HEK293 (cell line): ENCODE measurements at regions of chr5 and their contacts with region 1.

Region 1: GRCh38 chr5:32232441-32233219 is 58.5 kb upstream of the GOLPH3 start:
- H3K4me3 ChIP-seq: no peak overlapping the region
- H3K27ac ChIP-seq: no peak overlapping the region
- H3K4me1 ChIP-seq: no peaks in the 10 kb centered on the region
- CTCF ChIP-seq: peak; percentile 78; the same call in 1 of the 2 replicates

Region 2: DNA sequence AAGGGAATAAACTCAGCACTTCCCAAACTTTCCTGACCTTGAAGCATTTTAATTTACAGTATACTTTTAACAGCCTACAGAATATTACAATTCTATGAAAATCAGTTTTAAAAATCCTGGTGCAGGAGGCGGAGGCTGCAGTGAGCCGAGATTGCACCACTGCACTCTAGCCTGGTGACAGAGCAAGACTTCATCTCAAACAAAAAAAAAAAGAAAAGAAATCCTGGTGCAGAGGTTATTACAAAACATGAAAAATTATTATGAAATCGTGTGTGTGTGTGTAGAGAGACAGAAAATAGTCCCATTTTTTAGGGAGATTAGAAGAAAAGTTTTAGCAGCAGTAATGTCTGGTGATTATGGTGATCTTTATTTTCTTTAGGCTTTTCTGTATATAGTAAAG is 85.4 kb before region 1 on chr5:
- CTCF ChIA-PET with region 1: no interaction called
- POLR2A ChIA-PET with region 1: no interaction called
- H3K4me3 ChIP-seq: no peak overlapping the region
- H3K27ac ChIP-seq: no peak overlapping the region
- H3K4me1 ChIP-seq: peaks cover 51% of the 10 kb centered on the region
- CTCF ChIP-seq: no peak

Region 3: GRCh38 chr5:32244017-32244416 is 11.4 kb after region 1 on chr5:
- CTCF ChIA-PET with region 1: interaction called, 18 read pairs
- POLR2A ChIA-PET with region 1: no interaction called
- H3K4me3 ChIP-seq: no peak overlapping the region
- H3K27ac ChIP-seq: no peak overlapping the region
- H3K4me1 ChIP-seq: no peaks in the 10 kb centered on the region
- CTCF ChIP-seq: no peak

Region 4: GRCh38 chr5:32251871-32252458 is 19.3 kb after region 1 on chr5:
- CTCF ChIA-PET with region 1: interaction called, 15 read pairs
- POLR2A ChIA-PET with region 1: no interaction called
- H3K4me3 ChIP-seq: no peak overlapping the region
- H3K27ac ChIP-seq: no peak overlapping the region
- H3K4me1 ChIP-seq: peaks cover 3% of the 10 kb centered on the region; the same call in 1 of the 2 replicates
- CTCF ChIP-seq: no peak

Region 5: DNA sequence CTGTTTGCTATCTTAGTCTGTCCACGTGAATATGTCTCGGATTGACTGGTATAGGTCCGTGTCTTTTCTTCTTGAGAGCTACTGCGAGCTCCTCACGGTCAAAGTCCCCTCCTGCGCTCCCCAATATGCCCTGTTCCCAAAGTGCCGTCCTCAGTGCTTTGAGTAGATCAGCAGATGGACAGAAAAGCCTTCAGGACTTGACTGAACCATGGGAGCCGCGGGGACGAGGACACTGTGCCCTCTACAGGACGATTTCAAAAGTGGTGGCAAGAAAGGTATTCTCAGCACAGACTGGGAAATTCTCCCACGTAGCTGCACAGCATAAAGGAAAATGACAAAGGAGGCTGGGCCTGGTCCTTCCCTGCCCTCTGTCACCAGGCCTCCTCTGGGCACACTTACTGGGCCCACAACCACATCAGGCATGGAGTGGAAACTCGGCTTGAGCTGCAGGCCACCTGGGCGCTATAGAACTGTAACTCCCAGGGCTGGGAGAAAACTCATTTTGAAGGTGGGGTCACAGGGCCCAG is 96.7 kb after region 1 on chr5:
- CTCF ChIA-PET with region 1: interaction called, 86 read pairs
- POLR2A ChIA-PET with region 1: interaction called, 5 read pairs
- H3K4me3 ChIP-seq: no peak overlapping the region
- H3K27ac ChIP-seq: no peak overlapping the region
- H3K4me1 ChIP-seq: 0 out of 2 replicates have a peak, but pooled peaks cover 3% of the 10 kb centered on the region
- CTCF ChIP-seq: peak; percentile 88

Region 6: GRCh38 chr5:32613050-32613672 is 380.5 kb after region 1 on chr5:
- CTCF ChIA-PET with region 1: interaction called, 14 read pairs
- POLR2A ChIA-PET with region 1: no interaction called
- H3K4me3 ChIP-seq: no peak overlapping the region
- H3K27ac ChIP-seq: no peak overlapping the region
- H3K4me1 ChIP-seq: no peaks in the 10 kb centered on the region
- CTCF ChIP-seq: peak; percentile 85